ENCODE measurements at regions of chr6 and their contacts with region 1.

Region 1: DNA sequence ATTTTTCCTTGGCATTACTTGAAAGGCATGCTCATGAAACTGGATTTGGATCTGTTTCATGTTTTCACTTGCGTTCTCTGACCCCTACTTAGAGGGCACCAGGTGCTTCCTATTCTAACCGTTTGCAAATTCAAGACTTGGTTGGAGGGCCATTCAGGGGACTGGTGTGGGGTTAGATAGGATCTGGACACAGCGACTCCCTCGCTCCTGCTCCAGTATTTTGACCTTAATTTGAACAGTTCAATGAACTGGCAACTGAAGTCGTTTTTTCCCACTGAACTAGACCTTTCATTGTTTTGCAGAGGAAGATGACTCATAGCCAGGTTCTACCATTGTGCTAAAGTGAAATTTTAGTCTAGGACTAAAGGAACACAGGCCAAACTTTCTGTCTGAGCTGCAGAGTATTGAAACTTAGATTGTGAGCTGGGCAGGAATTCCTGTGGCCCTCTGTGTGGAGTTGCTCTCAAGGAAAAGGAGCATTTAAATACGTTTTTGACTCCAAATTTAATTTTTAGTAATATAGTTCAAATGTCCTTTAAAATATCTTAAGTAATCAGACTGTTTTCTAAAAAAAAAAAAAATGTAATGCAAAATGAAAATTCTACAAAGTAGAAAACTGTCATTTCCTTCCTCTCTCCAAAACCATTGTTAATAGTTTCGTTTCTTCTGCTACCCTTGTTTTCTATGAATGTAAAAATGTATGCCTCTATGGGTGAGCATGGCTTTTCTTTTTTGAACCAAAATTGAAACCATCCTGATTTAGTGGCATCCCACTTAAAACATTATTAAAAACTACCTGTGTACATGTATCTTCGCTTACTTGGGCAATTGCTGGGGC is 64.8 kb downstream of the UTRN start:
- DNase-seq: no peak
- ATAC-seq: peak; percentile 45
- H3K4me3 Mint-ChIP-seq: peak overlapping the region; percentile 69
- H3K27ac Mint-ChIP-seq: peak overlapping the region; percentile 96
- H3K4me1 Mint-ChIP-seq: peaks cover 88% of the 10 kb centered on the region
- H3K27me3 Mint-ChIP-seq: no peaks in the 10 kb centered on the region

Region 2: DNA sequence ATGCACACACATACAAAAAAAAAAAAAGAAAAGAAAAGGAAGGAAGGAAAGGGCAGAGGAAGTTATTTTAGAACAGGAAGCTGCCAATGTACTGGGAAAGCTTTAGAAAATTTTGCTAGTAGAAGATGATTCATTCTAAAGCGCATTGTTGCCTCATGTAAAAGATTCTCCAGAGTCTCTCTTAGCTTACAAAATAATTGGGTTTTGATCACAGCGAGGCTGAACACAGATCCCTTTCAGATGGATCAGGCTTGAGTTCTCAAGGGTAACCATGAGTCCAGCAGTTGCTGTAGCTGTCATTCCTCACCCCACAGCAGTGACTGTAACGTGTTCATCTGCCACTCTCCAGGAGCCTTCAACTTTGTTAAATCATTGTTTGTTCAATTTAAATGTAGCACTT is 590.2 kb before region 1 on chr6:
- CTCF ChIA-PET with region 1: no interaction called
- POLR2A ChIA-PET with region 1: no interaction called
- intact Hi-C with region 1: no loop called
- DNase-seq: no peak
- ATAC-seq: no peak
- H3K4me3 Mint-ChIP-seq: no peak overlapping the region
- H3K27ac Mint-ChIP-seq: no peak overlapping the region
- H3K4me1 Mint-ChIP-seq: peaks cover 17% of the 10 kb centered on the region
- H3K27me3 Mint-ChIP-seq: no peaks in the 10 kb centered on the region

Region 3: DNA sequence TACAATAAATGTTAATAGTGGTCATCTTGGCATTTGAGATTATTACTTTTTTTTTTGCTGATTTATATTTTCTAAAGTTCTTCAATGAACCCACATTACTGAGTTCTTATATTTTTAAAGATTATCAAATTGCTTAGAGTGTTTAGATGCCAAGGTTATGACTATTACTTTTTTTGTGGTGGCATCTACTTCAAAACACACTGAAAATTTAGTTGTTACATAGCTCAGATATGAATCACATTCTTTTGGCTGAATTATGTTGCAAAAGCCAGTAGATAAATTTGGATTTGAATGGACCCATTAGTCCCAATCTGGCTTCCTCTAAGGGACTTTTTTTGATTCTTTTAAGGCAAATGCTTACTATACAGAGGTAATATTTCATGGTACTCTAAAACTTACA is 55.9 kb before region 1 on chr6:
- CTCF ChIA-PET with region 1: no interaction called
- POLR2A ChIA-PET with region 1: no interaction called
- intact Hi-C with region 1: no loop called
- DNase-seq: no peak
- ATAC-seq: no peak
- H3K4me3 Mint-ChIP-seq: no peak overlapping the region
- H3K27ac Mint-ChIP-seq: no peak overlapping the region
- H3K4me1 Mint-ChIP-seq: peaks cover 6% of the 10 kb centered on the region
- H3K27me3 Mint-ChIP-seq: peaks cover 3% of the 10 kb centered on the region

Region 4: DNA sequence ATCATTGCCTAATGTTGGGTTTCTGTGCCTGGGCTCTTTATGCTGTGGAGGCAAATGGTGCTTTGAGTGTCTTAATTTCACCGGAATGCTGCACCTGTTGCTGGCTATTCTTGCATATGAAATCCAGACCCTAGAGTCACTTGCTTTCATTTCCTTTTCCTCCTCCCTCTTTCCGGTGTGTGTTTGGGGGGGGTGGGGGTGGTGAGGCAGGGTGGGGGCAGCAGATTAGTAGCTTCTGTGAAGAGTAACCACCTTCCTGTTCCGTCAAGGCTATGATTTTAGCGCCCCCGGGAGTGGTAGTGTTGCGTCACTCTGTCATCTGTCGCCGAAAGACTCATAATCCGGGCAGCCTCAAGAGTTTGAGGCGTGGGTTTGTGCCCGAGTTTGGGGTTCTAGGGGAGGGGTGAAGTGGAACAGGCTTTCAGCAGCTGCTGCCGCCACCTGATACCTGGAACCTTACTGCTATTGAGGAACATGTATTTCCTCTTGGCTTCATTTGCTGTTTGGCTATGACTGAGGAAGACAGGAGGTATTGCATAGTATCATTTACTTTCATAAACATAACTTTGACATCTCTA is 15.7 kb before region 1 on chr6:
- CTCF ChIA-PET with region 1: no interaction called
- POLR2A ChIA-PET with region 1: interaction called, 3 read pairs
- intact Hi-C with region 1: loop called in 1 of 2 experiments (anchors 2 kb)
- DNase-seq: peak; percentile 81
- ATAC-seq: peak; percentile 79
- H3K4me3 Mint-ChIP-seq: peak overlapping the region; percentile 60
- H3K27ac Mint-ChIP-seq: peak overlapping the region; percentile 80
- H3K4me1 Mint-ChIP-seq: peaks cover 54% of the 10 kb centered on the region
- H3K27me3 Mint-ChIP-seq: no peaks in the 10 kb centered on the region

Region 5: DNA sequence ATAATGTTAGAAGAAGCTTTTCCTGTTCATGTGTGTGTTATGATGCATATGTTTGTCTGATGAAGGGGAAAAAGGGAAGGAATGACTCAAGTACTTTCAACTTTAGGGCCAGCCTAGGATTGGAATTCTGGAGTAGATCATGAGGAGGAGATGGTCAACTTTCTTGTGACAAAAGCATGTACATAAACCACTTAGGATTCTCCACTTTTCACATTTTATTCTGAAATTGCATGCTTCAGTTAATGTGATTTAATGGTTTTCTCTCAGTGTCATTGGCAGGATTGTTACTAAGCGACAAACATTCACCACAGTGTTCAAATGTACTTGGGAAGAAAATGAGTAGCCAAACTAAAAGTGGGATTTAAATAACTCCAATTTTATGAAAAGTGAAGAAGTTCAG is 15.4 kb after region 1 on chr6:
- CTCF ChIA-PET with region 1: interaction called, 5 read pairs
- POLR2A ChIA-PET with region 1: interaction called, 6 read pairs
- intact Hi-C with region 1: loop called in 1 of 2 experiments (anchors 2 kb)
- DNase-seq: no peak
- ATAC-seq: no peak
- H3K4me3 Mint-ChIP-seq: no peak overlapping the region
- H3K27ac Mint-ChIP-seq: peak overlapping the region; percentile 12
- H3K4me1 Mint-ChIP-seq: peaks cover 65% of the 10 kb centered on the region
- H3K27me3 Mint-ChIP-seq: no peaks in the 10 kb centered on the region

Region 6: GRCh38 chr6:144395014-144395413 is 45.1 kb after region 1 on chr6:
- CTCF ChIA-PET with region 1: no interaction called
- POLR2A ChIA-PET with region 1: no interaction called
- intact Hi-C with region 1: loop called in 1 of 2 experiments (anchors 5 kb)
- DNase-seq: no peak
- ATAC-seq: no peak
- H3K4me3 Mint-ChIP-seq: no peak overlapping the region
- H3K27ac Mint-ChIP-seq: no peak overlapping the region
- H3K4me1 Mint-ChIP-seq: peaks cover 47% of the 10 kb centered on the region
- H3K27me3 Mint-ChIP-seq: no peaks in the 10 kb centered on the region

Region 7: GRCh38 chr6:144469144-144469575 is 119.3 kb after region 1 on chr6:
- CTCF ChIA-PET with region 1: interaction called, 3 read pairs
- POLR2A ChIA-PET with region 1: no interaction called
- intact Hi-C with region 1: loop called in 1 of 2 experiments (anchors 5 kb)
- DNase-seq: peak; percentile 41
- ATAC-seq: peak; percentile 89
- H3K4me3 Mint-ChIP-seq: peak overlapping the region; percentile 62
- H3K27ac Mint-ChIP-seq: peak overlapping the region; percentile 92
- H3K4me1 Mint-ChIP-seq: peaks cover 27% of the 10 kb centered on the region
- H3K27me3 Mint-ChIP-seq: no peaks in the 10 kb centered on the region

Region 8: DNA sequence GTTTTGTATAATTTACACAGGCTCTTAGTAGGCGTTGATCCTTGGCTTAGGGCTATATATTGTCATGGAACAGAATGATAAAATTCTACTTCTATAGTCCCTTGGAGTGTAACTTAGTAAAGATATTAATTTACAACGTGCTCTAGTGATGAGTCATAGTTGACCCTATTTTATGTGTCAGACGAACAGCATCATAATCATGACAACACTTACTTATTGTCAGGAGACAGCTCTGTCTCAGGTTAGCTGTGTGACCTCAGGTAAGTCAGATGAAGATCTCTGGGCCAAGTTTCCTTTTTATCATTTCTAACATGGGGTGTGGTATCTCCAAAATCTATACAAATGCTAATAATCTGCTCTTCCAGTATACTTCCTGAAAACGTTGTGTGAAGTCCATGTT is 408.7 kb after region 1 on chr6:
- CTCF ChIA-PET with region 1: no interaction called
- POLR2A ChIA-PET with region 1: no interaction called
- intact Hi-C with region 1: no loop called
- DNase-seq: no peak
- ATAC-seq: peak; percentile 68
- H3K4me3 Mint-ChIP-seq: no peak overlapping the region
- H3K27ac Mint-ChIP-seq: no peak overlapping the region
- H3K4me1 Mint-ChIP-seq: no peaks in the 10 kb centered on the region
- H3K27me3 Mint-ChIP-seq: no peaks in the 10 kb centered on the region